Right cardiac atrium (tissue), 5 donors: ENCODE measurements at regions of chr3 and their contacts with region 1.

Region 1: GRCh38 chr3:161104561-161105551 is at the start of gene B3GALNT1:
- DNase-seq: peak; percentile 65 to 85 (median 83)
- ATAC-seq: peak; percentile 89 to 91
- H3K4me3 ChIP-seq: peak within 1 kb of the TSS; percentile 51
- H3K27ac ChIP-seq: peak within 1 kb of the TSS; percentile 13
- H3K4me1 ChIP-seq: peaks cover 3% of the 10 kb centered on the region
- H3K27me3 ChIP-seq: no peaks in the 10 kb centered on the region
- total RNA-seq, gene B3GALNT1: 64.9 to 89.6 (median 79.6) TPM

Region 2: GRCh38 chr3:161150001-161150525 is 45.2 kb after region 1 on chr3:
- intact Hi-C with region 1: loop called in 1 of 4 experiments (anchors 10 kb)
- DNase-seq: no peak
- ATAC-seq: no peak
- H3K4me3 ChIP-seq: no peak overlapping the region
- H3K27ac ChIP-seq: no peak overlapping the region
- H3K4me1 ChIP-seq: peaks cover 2% of the 10 kb centered on the region
- H3K27me3 ChIP-seq: no peaks in the 10 kb centered on the region

Region 3: DNA sequence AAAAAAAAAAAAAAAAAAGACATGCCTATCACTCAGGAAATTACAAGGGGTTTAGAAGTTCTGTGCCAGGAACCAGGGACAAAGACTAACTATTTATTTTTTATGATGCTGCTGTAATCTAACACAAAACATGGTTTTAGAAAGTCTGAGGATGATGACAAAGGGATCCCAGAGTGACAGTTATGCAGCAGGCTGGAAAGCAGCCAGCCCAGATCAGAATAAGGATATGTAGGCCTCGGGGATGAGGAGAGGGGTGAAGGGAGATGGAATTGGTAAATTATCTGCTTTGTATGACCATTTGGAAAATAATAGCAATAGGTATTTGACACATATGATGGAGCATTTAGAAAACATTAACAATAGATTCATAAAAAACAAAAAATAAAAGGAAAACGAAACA is 82.2 kb after region 1 on chr3:
- intact Hi-C with region 1: loop called in 1 of 4 experiments (anchors 10 kb)
- DNase-seq: no peak
- ATAC-seq: no peak
- H3K4me3 ChIP-seq: no peak overlapping the region
- H3K27ac ChIP-seq: no peak overlapping the region
- H3K4me1 ChIP-seq: no peaks in the 10 kb centered on the region
- H3K27me3 ChIP-seq: no peaks in the 10 kb centered on the region